Lower leg skin (tissue), 4 donors: ENCODE measurements at regions of chr16 and their contacts with region 1.

Region 1: DNA sequence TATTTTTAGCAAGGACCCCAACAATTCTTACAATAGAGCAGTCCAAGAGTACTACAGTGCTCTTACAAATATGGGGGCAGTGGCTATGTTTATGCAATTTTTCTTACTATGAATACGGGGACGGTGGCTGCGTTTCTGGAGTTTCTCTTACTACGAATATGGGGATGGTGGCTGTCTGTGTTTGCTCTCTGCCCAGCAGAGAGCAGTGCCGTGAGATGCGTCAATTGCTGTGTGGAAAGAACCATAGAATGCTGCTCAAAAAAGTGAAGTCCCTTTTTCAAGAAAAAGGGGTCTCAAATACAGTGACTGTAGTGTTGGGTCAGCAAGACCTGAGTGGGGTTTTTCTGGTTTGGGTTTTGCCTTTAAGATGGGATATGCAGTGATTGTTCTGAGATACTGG is 53.9 kb downstream of the KNOP1 start:
- DNase-seq: no peak
- H3K4me3 ChIP-seq: no peak overlapping the region
- CTCF ChIP-seq: no peak
- POLR2A ChIP-seq: no peak

Region 2: DNA sequence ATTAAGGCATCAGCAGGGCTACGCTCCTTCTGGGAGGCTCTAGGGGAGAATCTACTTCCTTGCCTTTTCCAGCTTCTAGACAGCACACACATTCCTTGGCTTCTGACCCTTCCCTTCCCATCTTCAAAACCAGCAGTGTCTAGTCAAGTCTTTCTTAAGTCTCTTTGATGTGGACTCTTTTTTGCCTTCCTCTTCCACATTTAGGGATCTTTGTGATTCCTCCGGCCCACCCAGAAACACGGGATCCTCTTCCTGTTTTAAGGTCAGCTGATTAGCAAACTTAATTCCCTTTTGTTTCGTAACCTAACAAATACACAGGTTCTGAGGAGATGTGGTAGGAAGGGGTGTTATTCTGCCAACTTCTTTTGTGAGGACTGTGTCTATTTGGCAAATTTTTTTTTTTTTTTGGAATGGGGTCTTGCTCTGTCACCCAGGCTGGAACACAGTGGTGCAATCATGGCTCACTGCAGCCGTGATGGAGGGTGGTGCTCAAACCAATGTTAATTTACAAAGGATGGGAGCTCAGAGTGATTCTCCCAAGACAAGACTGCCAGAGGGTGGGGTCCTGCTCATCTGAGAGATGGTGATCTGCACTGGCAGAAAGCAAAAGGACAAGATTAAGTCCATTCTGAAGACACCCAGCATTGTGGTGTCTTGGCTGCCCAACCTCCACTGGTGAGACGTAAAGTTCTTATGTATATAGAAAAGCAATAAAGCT is 39.2 kb after region 1 on chr16:
- intact Hi-C with region 1: loop called (anchors 1 kb)
- DNase-seq: no peak
- H3K4me3 ChIP-seq: no peak overlapping the region
- CTCF ChIP-seq: no peak
- POLR2A ChIP-seq: no peak